Activated T-helper 1 cell treated with anti-CD3 and anti-CD28 coated beads, Interleukin-12 subunit alpha, Interleukin-12 subunit beta, Interleukin-2, Interleukin-4 antibody, amounts not matched to agents 30 ng/mL and 10 ng/mL and 1 ng/mL, durations not matched to agents 14 hours and 24 hours and 36 hours (primary cell): ENCODE measurements at regions of chr9 and their contacts with region 1.

Region 1: GRCh38 chr9:112028280-112029221 is 131.9 kb downstream of the UGCG start:
- DNase-seq: peak; percentile 6
- H3K4me3 Mint-ChIP-seq: peak overlapping the region; percentile 5
- H3K27ac Mint-ChIP-seq: peak overlapping the region; percentile 49
- H3K4me1 Mint-ChIP-seq: peaks cover 48% of the 10 kb centered on the region
- H3K27me3 Mint-ChIP-seq: peaks cover 4% of the 10 kb centered on the region

Region 2: GRCh38 chr9:112012026-112012902 is 16.3 kb before region 1 on chr9:
- intact Hi-C with region 1: loop called (anchors 1 kb)
- DNase-seq: no peak
- H3K4me3 Mint-ChIP-seq: no peak overlapping the region
- H3K27ac Mint-ChIP-seq: no peak overlapping the region
- H3K4me1 Mint-ChIP-seq: peaks cover 21% of the 10 kb centered on the region
- H3K27me3 Mint-ChIP-seq: peaks cover 50% of the 10 kb centered on the region

Region 3: GRCh38 chr9:112061152-112061740 is 32.7 kb after region 1 on chr9:
- intact Hi-C with region 1: loop called (anchors 5 kb)
- DNase-seq: peak; percentile 38
- H3K4me3 Mint-ChIP-seq: no peak overlapping the region
- H3K27ac Mint-ChIP-seq: peak overlapping the region; percentile 4
- H3K4me1 Mint-ChIP-seq: peaks cover 27% of the 10 kb centered on the region
- H3K27me3 Mint-ChIP-seq: no peaks in the 10 kb centered on the region